Gastrocnemius medialis (tissue), 4 donors: ENCODE measurements at regions of chr3 and their contacts with region 1.

Region 1: DNA sequence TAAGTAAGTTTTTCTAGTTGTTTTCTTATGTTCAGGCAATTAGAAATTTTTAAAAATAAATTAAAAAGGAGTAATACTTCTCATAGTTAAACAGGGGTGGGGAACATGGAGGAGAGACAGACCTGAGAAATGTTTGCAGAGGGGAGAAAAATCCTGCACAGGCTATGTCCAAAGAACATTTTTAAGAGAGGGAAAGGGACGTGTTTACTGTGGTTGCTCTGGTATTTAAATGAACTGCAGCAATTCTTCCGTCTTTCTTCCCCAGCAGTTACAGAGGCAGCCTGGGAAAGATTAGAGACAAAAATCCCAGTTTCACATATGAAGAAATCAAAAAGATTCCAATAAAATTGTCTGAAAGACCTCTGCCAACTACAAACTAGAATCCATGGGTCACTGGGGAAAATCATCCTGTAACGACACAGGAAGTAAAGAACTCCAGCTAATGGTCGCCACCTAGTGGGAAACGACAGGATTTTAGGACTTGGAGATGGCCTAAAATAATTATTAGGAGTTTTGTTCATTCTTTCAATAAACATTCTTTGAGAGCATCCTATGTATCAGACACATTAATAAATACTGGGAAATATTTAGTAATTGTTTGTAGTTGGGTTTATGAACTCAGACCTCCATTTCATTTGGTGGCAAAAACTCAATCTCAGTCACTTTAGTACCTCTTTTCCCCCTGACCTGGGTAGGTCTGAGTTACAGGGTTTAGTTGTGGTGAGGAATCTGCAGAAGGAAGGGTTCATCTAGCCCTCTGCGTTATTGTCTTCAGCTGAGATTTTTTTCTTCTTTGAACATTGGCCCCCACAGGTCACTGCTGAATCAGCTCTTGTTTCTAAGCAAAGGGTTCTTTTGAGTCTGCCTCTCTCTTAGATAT is 69.9 kb upstream of the GOLIM4 start:
- DNase-seq: peak; percentile 38 to 48
- ATAC-seq: peak; percentile 83 to 92
- H3K4me3 ChIP-seq: peak overlapping the region in 1 of 4 donors; percentile 24
- H3K27ac ChIP-seq: no peak overlapping the region
- H3K4me1 ChIP-seq: peaks cover 0 to 4% of the 10 kb centered on the region in 2 donors
- H3K27me3 ChIP-seq: no peaks in the 10 kb centered on the region
- CTCF ChIP-seq: peak; percentile 72 to 84 (median 77)
- POLR2A ChIP-seq: no peak

Region 2: DNA sequence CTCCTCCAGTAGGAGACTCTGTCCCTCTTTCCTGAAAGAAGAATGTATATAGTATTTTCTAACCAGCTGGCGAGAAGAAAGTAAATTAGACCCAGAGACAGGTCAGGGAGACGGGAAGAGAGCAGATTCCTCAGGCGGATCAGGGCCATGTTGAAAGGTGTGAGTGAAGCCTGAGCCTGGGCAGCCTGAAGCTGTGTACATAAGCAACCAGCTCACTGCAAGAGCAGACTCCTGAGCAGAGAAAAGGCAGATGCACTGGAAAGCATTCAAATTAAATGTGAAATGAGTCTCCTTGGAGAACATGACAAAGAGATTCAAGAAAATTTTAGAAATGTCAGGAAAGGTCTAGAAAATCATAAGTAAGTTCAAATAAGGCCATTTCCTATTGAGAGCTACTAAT is 235.7 kb before region 1 on chr3:
- in situ Hi-C with region 1: no loop called
- intact Hi-C with region 1: loop called (anchors 10 kb)
- DNase-seq: no peak
- ATAC-seq: no peak
- H3K4me3 ChIP-seq: no peak overlapping the region
- H3K27ac ChIP-seq: no peak overlapping the region
- H3K4me1 ChIP-seq: no peaks in the 10 kb centered on the region
- H3K27me3 ChIP-seq: no peaks in the 10 kb centered on the region
- CTCF ChIP-seq: no peak
- POLR2A ChIP-seq: no peak

Region 3: DNA sequence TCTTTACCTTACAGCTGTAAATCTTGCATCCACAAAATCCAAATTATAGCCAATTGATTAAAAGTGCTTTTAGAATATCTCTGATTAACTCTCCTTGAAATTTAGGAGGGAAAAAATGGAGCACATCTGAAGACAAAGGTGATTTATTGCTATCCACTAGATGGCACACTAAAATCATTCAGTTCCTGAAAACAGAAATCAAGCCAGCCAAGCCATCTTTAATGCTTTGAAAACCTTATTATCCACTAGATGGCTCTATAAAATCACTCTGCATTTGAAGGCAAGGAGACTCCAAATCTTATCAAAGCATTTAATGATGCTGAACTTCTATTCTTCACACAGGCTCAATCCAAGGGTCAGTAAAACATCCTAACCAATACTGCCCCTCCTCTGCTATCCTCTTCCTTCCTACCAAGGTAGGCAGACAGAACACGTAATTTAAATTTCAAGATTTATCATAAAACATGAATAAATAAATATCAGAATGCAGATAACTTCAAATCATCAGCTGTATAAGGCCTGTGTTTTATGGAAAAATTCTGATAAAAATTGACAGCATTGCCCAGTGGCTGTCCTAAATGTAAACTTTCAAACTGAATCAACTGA is 118.3 kb before region 1 on chr3:
- in situ Hi-C with region 1: loop called (anchors 5 kb)
- intact Hi-C with region 1: loop called (anchors 1 kb)
- DNase-seq: no peak
- ATAC-seq: peak; percentile 83 to 84
- H3K4me3 ChIP-seq: no peak overlapping the region
- H3K27ac ChIP-seq: no peak overlapping the region
- H3K4me1 ChIP-seq: peaks cover 29 to 48% of the 10 kb centered on the region in 2 donors
- H3K27me3 ChIP-seq: no peaks in the 10 kb centered on the region
- CTCF ChIP-seq: peak; percentile 66 to 97 (median 84)
- POLR2A ChIP-seq: no peak

Region 4: DNA sequence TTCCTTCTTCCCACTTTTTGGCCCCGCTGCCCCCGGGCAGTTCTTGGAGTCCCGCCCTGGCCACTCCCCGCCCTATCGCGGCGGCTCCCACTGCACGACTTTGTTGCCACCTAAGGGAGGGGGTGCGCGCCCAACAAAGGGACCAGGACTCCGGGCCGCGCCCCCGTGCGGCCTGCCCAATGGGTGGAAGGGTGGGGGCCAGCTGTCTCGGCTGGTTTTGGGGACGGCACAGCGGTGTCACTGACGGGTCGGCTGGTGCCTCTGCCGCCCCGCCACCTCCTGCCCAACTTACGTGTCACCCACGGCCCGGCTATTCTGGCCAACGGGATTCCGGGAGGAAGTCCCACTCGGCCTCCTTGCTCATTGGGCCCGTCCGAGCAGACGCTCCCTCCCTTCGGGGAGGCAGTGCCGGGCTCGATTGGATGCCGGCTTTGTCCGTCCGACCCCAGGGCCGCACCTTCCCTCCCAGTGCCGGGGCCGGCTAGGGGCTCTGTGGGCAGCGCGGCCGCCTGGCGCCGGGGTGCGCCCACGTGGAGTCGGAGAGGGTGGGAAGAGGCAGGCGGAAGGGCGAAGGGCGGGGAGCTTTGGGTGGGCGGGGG is 69.9 kb before region 1 on chr3 and contains the start of gene GOLIM4:
- in situ Hi-C with region 1: no loop called
- intact Hi-C with region 1: loop called (anchors 1 kb)
- DNase-seq: peak; percentile 95 to 96
- ATAC-seq: peak; percentile 87 to 91
- H3K4me3 ChIP-seq: peak within 1 kb of the TSS; percentile 73 to 92 (median 88)
- H3K27ac ChIP-seq: peak within 1 kb of the TSS; percentile 92 to 97 (median 94)
- H3K4me1 ChIP-seq: peaks cover 42 to 44% of the 10 kb centered on the region in 2 donors
- H3K27me3 ChIP-seq: no peaks in the 10 kb centered on the region
- CTCF ChIP-seq: peak in 1 of 5 experiments; percentile 21
- POLR2A ChIP-seq: peak; percentile 85 to 91
- total RNA-seq, gene GOLIM4: 13.0 to 20.8 (median 17.8) TPM

Region 5: GRCh38 chr3:168121184-168122017 is 44.2 kb before region 1 on chr3:
- in situ Hi-C with region 1: no loop called
- intact Hi-C with region 1: no loop called
- DNase-seq: peak in 1 of 2 donors; percentile 25
- ATAC-seq: peak; percentile 59 to 69
- H3K4me3 ChIP-seq: no peak overlapping the region
- H3K27ac ChIP-seq: peak overlapping the region in 3 of 4 donors; percentile 21 to 42 (median 23)
- H3K4me1 ChIP-seq: peaks cover 17 to 29% of the 10 kb centered on the region in 2 donors
- H3K27me3 ChIP-seq: no peaks in the 10 kb centered on the region
- CTCF ChIP-seq: no peak
- POLR2A ChIP-seq: no peak